Gastrocnemius medialis (tissue), 4 donors: ENCODE measurements at regions of chr6 and their contacts with region 1.

Region 1: GRCh38 chr6:30571075-30571768 is at the start of gene ABCF1:
- DNase-seq: peak; percentile 96 to 97
- ATAC-seq: peak; percentile 91 to 94
- H3K4me3 ChIP-seq: peak within 1 kb of the TSS; percentile 72 to 96 (median 78)
- H3K27ac ChIP-seq: peak within 1 kb of the TSS; percentile 91 to 99 (median 94)
- H3K4me1 ChIP-seq: peaks cover 31 to 36% of the 10 kb centered on the region in 2 donors
- H3K27me3 ChIP-seq: no peaks in the 10 kb centered on the region
- CTCF ChIP-seq: no peak
- POLR2A ChIP-seq: peak; percentile 90 to 94
- total RNA-seq, gene ABCF1: 55.8 to 122 (median 111) TPM

Region 2: GRCh38 chr6:30556066-30556905 is 14.9 kb before region 1 on chr6 and contains the start of gene GNL1:
- in situ Hi-C with region 1: no loop called
- intact Hi-C with region 1: loop called (anchors 1 kb)
- DNase-seq: peak; percentile 80 to 92
- ATAC-seq: peak; percentile 77 to 79
- H3K4me3 ChIP-seq: peak within 1 kb of the TSS; percentile 87 to 99 (median 96)
- H3K27ac ChIP-seq: peak within 1 kb of the TSS; percentile 91 to 99 (median 95)
- H3K4me1 ChIP-seq: peaks cover 11 to 18% of the 10 kb centered on the region in 2 donors
- H3K27me3 ChIP-seq: no peaks in the 10 kb centered on the region
- CTCF ChIP-seq: peak in 1 of 5 experiments; percentile 15
- POLR2A ChIP-seq: peak; percentile 34 to 38
- total RNA-seq, gene GNL1: 13.2 to 16.0 (median 14.9) TPM

Region 3: GRCh38 chr6:30626484-30627366 is 55.5 kb after region 1 on chr6 and contains the start of gene ATAT1:
- in situ Hi-C with region 1: no loop called
- intact Hi-C with region 1: no loop called
- DNase-seq: peak; percentile 78 to 81
- ATAC-seq: peak; percentile 86 to 88
- H3K4me3 ChIP-seq: peak within 1 kb of the TSS; percentile 45 to 68 (median 64)
- H3K27ac ChIP-seq: peak within 1 kb of the TSS; percentile 84 to 96 (median 88)
- H3K4me1 ChIP-seq: peaks cover 4 to 5% of the 10 kb centered on the region in 2 donors
- H3K27me3 ChIP-seq: no peaks in the 10 kb centered on the region
- CTCF ChIP-seq: peak in 3 of 5 experiments; percentile 32 to 44 (median 33)
- POLR2A ChIP-seq: peak; percentile 23 to 32
- total RNA-seq, gene ATAT1: 0.73 to 7.8 (median 1.7) TPM